ENCODE measurements at regions of chr11 and their contacts with region 1.

Region 1: DNA sequence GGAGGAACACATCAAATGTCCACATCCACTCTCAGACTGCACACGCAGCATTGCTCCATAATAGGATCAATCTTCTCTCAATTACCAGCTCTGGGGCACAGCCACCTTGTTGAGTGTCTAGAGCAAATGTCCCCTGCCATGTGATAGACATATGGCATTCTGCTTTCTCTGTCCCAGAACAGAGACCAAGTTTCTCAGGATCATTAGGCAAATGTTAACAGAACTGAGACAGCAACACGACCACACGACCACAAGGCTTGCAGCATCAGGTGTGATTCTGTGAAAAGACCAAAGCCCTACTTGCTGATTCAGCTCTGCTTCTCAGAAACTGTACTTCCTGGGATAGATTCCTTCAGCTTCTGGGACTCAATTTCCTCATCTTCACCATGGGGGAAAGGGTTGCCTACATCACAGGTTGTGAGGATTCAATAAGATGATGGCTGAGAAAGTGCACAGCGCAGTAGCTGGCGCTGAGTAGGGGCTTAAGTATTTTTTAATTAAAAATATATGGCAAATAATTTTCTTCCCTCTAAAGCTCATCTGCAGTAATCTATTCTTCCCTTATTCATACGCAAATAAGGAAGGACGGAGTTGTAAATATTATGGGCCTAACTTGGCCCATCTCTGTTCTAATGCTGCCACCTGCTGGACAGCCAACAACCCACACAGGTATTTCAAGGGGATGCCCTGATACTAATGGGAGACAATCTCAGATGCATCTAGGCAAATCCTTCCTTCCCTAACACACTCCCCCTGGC is 54.3 kb upstream of the USP47 start:
- DNase-seq: peak; percentile 78 to 86
- H3K4me3 ChIP-seq: no peak overlapping the region
- H3K4me1 ChIP-seq: no peaks in the 10 kb centered on the region
- H3K27me3 ChIP-seq: peaks cover 5% of the 10 kb centered on the region; the same call in 1 of the 2 replicates

Region 2: DNA sequence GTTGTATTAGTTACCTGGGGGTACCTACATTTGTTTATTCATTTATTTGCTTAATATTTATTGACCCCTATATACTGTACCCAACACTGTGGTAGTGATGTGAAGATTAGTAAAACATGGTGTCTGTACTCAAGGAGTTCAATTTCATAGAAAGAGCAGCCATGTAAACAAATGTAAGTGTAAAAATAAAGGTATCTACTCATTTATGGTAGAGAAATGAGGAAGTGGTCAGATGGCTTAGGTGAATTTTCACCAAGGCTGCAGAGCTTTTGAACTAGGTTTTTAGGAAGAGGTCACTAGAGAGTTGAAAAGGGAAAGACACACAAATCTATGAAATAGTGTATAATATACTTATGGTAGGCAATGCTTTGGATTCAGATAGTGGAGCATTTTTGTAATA is 1025.3 kb before region 1 on chr11:
- in situ Hi-C with region 1: loop called (anchors 10 kb)
- DNase-seq: no peak
- H3K4me3 ChIP-seq: no peak overlapping the region
- H3K4me1 ChIP-seq: peaks cover 4% of the 10 kb centered on the region; the same call in 1 of the 2 replicates
- H3K27me3 ChIP-seq: no peaks in the 10 kb centered on the region

Region 3: DNA sequence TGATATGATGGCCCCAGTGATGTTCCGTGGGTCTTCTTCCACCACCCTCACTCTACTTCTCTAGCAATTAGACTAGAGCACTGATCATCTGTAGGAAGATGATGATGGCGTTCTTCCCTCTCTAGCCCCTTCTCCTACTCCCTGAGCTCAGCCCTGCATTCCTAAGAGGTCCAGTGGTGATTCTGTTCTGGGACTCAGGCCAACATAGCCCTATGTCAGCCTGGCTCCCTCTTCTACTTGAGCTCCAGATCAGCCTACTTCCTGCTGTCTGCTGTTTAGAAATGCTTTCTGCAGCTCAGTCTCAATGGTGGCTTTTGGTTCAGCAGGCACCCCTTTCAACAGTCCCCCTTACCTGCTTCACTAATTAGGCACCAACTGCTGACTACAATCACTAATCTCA is 843.5 kb before region 1 on chr11:
- in situ Hi-C with region 1: loop called (anchors 10 kb)
- DNase-seq: no peak
- H3K4me3 ChIP-seq: no peak overlapping the region
- H3K4me1 ChIP-seq: no peaks in the 10 kb centered on the region
- H3K27me3 ChIP-seq: no peaks in the 10 kb centered on the region

Region 4: DNA sequence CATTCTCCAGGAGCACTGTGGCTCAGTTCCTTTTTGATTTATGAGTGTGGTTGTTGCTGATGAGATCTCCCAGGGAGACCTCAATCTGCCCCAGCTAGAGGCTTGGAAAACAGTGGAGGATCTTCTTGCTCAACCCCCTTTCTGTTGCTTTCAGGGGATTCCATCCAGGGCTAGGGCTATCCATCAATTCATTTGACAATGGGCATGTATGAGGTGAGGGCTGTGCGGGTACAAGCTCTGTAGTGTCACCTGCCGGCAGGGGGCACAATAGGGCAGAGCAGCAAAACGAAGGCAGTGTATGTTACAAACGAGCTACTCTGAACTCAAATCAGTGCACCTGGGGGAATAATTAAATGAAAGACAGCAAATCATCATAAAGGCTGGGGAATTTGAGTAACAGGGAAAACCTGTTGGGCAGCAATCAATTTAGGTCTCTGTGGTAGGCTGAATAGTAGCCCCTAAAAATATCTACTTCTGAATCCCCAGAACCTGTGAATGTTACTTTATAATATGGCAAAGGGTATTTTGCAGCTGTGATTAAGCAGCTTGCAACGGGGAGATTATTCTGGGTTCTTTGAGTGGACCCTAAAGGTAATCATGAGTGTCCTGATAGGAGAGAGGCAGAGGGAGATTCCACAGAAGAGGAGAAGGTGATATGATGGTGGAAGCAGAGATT is 759.3 kb before region 1 on chr11:
- in situ Hi-C with region 1: loop called (anchors 5 kb)
- DNase-seq: peak; percentile 51 to 88
- H3K4me3 ChIP-seq: no peak overlapping the region
- H3K4me1 ChIP-seq: no peaks in the 10 kb centered on the region
- H3K27me3 ChIP-seq: no peaks in the 10 kb centered on the region; the same call in 1 of the 2 replicates

Measured in HAP-1 (cell line).